ENCODE measurements at regions of chr1 and their contacts with region 1.

Region 1: DNA sequence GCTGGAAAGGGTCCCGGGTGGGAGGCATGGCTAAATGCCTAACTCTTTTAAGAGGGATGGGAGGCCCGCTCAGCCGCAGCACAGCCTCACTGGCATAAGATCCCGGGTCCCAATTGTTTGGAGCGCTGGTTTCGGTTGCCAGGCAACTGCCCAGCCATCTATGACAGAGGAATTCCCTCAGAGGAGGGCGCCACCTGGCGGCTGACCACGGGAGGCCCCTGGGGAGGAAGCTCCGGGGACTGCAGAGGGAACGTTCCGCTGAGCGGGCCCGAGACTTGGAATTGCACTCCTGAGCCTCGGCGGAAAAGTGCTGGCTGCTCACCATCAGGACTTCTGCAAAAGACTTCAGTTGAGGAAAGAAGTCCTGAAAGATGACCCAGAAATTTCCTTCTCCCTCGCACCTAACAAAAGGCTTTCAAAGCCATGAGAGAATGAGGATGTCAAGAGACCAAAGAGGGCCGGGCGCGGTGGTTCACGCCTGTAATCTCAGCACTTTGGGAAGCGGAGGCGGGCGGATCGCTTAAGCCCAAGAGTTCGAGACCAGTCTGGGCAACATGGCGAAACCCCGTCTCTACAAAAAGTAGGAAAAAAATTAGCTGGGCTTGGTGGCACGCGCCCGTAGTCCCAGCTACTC is 1.1 kb upstream of the ELAPOR1 start:
- DNase-seq: peak; percentile 92
- H3K4me3 Mint-ChIP-seq: peak overlapping the region; percentile 67
- H3K27ac Mint-ChIP-seq: peak overlapping the region; percentile 74
- H3K4me1 Mint-ChIP-seq: peaks cover 27% of the 10 kb centered on the region
- H3K27me3 Mint-ChIP-seq: peaks cover 62% of the 10 kb centered on the region

Region 2: DNA sequence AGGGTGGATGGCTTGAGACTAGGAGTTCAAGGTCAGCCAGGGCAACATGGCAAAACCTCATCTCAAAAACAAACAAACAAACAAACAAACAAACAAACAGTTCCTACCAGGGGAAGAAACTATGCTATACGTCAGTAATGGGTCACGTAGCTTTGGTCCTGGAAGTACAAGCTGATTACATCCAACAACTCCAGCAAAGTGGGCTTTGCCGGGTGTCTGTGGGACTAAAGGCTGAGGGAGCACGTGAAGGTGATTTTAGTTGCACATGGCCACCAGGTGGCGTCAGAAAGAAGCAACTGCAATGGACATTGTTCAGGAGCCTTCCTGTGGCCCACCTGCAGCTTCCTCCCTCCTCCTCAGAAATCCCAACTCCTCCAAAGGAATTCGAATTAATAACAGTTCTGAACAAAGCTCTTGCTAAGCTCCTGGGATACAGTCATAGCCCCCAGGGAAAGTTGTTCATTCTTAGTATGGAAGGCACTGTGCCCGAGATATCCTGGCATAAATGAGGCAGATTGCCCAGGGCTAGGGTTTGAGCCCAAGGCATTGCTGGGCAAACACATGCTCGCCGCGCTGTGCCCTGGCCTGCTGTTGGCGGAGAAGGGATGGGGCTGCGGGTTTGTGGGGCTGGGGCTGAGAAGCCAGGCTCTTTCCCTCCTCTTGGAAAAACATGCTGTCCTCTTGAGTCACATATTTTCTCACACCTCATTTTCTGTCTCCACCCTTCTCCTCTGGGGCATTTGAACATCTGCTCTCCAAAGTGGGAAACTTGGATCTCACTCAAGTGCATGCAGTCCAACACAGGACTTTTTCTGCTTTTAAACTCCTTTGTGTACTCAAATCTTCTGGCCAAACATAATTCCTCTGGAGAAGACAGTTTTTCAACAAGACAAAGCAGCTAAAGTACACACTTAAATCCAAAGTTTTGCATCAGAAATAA is 284.5 kb before region 1 on chr1:
- CTCF ChIA-PET with region 1: interaction called, 38 read pairs
- DNase-seq: peak; percentile 85
- H3K4me3 Mint-ChIP-seq: no peak overlapping the region
- H3K27ac Mint-ChIP-seq: no peak overlapping the region
- H3K4me1 Mint-ChIP-seq: peaks cover 8% of the 10 kb centered on the region
- H3K27me3 Mint-ChIP-seq: peaks cover 23% of the 10 kb centered on the region

Region 3: DNA sequence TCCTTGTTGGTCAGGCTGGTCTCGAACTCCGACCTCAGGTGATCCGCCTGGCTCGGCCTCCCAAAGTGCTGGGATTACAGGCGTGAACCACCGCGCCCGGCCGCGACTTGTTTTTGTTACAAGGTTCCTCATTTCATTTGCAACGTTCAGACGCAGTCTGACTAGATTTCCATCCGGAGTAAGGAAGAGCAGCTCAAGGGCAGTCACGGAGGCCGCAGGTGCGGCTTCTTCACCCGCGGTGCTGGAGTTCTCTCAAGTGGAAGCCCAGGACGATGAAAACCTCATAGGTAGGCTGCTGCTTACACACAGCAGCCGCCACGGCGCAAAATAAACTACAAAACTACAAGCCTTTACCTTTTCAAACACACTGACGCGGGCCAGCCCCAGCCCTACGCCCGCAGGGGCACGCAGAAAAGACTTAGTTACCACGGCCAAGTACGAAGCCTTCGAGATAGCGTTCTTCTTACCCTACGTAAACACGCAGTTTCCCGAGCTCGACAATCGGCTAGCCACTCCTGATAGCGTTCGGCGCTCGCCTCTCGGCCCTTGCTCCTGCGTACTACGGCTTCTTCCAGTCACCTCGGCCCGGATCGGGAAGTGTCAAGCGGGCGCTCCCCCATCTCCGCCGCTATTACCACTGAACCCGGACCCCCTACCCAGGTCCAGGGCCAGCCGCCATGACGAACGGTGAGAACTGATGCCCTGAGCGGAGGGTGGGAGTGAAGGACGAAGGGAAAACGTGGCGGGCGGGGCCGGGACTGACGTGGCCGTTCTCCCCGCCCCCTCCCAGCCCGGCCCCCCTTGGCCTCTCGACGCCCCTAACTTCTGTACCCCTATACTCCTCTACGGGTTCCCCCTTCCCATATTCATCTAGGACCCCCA is 22.3 kb before region 1 on chr1 and contains the start of gene TMEM167B:
- CTCF ChIA-PET with region 1: interaction called, 18 read pairs
- DNase-seq: peak; percentile 94
- H3K4me3 Mint-ChIP-seq: peak within 1 kb of the TSS; percentile 92
- H3K27ac Mint-ChIP-seq: peak within 1 kb of the TSS; percentile 97
- H3K4me1 Mint-ChIP-seq: peaks cover 39% of the 10 kb centered on the region
- H3K27me3 Mint-ChIP-seq: no peaks in the 10 kb centered on the region

Region 4: GRCh38 chr1:109099938-109100773 is 12.6 kb before region 1 on chr1:
- CTCF ChIA-PET with region 1: interaction called, 45 read pairs
- DNase-seq: peak; percentile 98
- H3K4me3 Mint-ChIP-seq: peak overlapping the region; percentile 92
- H3K27ac Mint-ChIP-seq: peak overlapping the region; percentile 92
- H3K4me1 Mint-ChIP-seq: peaks cover 18% of the 10 kb centered on the region
- H3K27me3 Mint-ChIP-seq: peaks cover 4% of the 10 kb centered on the region

Region 5: DNA sequence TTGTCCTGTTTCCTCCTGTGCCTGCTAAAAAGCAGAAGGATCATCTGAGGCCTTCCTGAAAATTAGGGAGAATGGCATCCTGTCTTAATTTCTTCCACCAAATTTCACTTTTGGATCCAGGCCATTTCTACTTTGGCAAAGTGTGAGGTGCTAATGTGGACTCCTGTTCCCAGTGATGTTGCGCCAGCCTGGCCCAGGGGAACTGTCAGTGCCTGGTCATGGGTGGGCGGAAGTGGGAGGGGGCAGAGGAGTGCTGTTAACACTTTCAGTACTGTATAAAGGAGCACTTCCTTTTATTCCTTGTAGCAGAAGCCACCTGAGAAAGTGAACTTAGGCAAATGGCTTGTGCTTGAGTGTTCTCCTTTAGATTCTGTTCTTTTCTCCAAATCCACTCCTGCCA is 21.0 kb after region 1 on chr1:
- CTCF ChIA-PET with region 1: interaction called, 11 read pairs
- DNase-seq: peak; percentile 27
- H3K4me3 Mint-ChIP-seq: no peak overlapping the region
- H3K27ac Mint-ChIP-seq: no peak overlapping the region
- H3K4me1 Mint-ChIP-seq: peaks cover 16% of the 10 kb centered on the region
- H3K27me3 Mint-ChIP-seq: no peaks in the 10 kb centered on the region